Left cardiac atrium (tissue), 4 donors: ENCODE measurements at regions of chr12 and their contacts with region 1.

Region 1: GRCh38 chr12:105705765-105706164 is 375.3 kb downstream of the C12orf75 start:
- DNase-seq: peak; percentile 56
- ATAC-seq: peak; percentile 53 to 66

Region 2: DNA sequence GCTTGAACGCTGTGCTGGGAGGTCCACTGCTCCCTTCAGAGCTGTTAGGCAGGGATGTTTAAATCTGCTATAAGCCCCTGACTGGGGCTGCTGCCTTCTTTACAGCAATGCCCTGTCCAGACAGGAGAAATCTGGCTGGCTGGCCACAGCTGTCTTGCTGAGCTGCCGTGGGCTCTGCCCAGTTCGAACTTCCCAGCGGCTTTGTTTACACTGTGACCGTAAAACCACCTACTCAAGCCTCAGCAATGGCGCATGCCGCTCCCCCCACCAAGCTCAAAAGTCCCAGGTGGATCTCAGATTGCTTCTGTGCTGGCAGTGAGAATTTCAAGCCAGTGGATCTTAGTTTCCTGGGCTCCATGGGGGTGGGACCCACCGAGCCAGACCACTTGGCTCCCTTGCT is 506.2 kb after region 1 on chr12:
- intact Hi-C with region 1: loop called in 1 of 2 experiments (anchors 10 kb)
- DNase-seq: no peak
- ATAC-seq: no peak